ENCODE measurements at regions of chr19 and their contacts with region 1.

Region 1: GRCh38 chr19:46404055-46404752 is 9.2 kb downstream of the CCDC8 start:
- DNase-seq: peak; percentile 80 to 93
- ATAC-seq: peak; percentile 89 to 90
- H3K4me3 ChIP-seq: peak overlapping the region; percentile 53
- H3K27ac ChIP-seq: peak overlapping the region; percentile 90 to 92
- H3K4me1 ChIP-seq: no peaks in the 10 kb centered on the region
- CTCF ChIP-seq: peak; percentile 32; the same call in 2 of the 3 replicates
- EP300 ChIP-seq: no peak
- POLR2A ChIP-seq: peak; percentile 78; the same call in 1 of the 2 replicates
- RAD21 ChIP-seq: no peak

Region 2: GRCh38 chr19:46355234-46356148 is 48.7 kb before region 1 on chr19:
- CTCF ChIA-PET with region 1: interaction called, 10 read pairs
- POLR2A ChIA-PET with region 1: no interaction called
- DNase-seq: peak in 1 of 2 experiments; percentile 21
- ATAC-seq: peak in 1 of 2 experiments; percentile 31; a peak in 3 of 6 replicates
- H3K4me3 ChIP-seq: no peak overlapping the region
- H3K27ac ChIP-seq: peak overlapping the region in 1 of 2 experiments; percentile 45; a peak in 3 of 6 replicates
- H3K4me1 ChIP-seq: peaks cover 44% of the 10 kb centered on the region
- CTCF ChIP-seq: no peak
- EP300 ChIP-seq: no peak
- POLR2A ChIP-seq: no peak
- RAD21 ChIP-seq: no peak

Region 3: GRCh38 chr19:46426506-46427162 is 22.4 kb after region 1 on chr19:
- CTCF ChIA-PET with region 1: interaction called, 43 read pairs
- POLR2A ChIA-PET with region 1: no interaction called
- DNase-seq: peak; percentile 81 to 95
- ATAC-seq: peak; percentile 90
- H3K4me3 ChIP-seq: peak overlapping the region; percentile 55
- H3K27ac ChIP-seq: peak overlapping the region; percentile 68 to 86
- H3K4me1 ChIP-seq: peaks cover 8% of the 10 kb centered on the region
- CTCF ChIP-seq: no peak
- EP300 ChIP-seq: no peak
- POLR2A ChIP-seq: no peak; the same call in 1 of the 2 replicates
- RAD21 ChIP-seq: no peak

Region 4: GRCh38 chr19:46442808-46443450 is 38.7 kb after region 1 on chr19:
- CTCF ChIA-PET with region 1: interaction called, 22 read pairs
- POLR2A ChIA-PET with region 1: no interaction called
- DNase-seq: peak; percentile 60 to 61
- ATAC-seq: peak; percentile 83 to 90
- H3K4me3 ChIP-seq: no peak overlapping the region
- H3K27ac ChIP-seq: peak overlapping the region; percentile 64 to 65
- H3K4me1 ChIP-seq: peaks cover 13% of the 10 kb centered on the region
- CTCF ChIP-seq: no peak
- EP300 ChIP-seq: no peak
- POLR2A ChIP-seq: no peak
- RAD21 ChIP-seq: no peak

Region 5: DNA sequence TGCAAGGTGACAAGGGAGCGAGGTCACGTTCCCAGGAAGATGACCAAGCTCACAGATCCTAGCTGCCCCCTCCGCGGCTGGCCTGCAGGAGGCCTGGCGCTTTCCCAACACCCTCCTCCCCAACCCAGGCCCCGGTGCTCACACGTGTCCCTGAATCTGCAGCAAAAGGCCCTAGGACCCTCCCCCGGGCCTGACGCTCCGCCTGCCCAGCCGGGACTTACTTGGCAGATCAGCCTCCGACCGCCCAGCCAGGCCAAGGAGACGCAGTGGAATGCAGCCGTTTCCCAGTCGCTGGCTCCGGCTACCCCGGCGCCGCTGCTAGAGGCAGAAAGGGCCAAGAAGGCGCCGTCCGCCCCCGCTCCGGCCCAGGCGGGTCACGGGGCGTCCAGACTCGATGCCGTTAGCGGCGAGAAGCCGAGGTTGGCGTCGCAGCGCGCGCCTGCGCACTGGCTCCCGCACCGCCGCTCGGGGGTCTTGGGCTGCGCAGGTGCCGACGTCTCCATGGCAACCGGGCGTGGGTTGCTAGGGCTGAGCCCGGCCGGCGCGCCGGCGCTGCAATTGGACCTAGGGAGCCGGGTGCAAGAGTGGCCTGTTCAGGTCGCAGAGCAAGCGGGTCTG is 67.0 kb after region 1 on chr19 and contains the start of gene PNMA8A:
- CTCF ChIA-PET with region 1: interaction called, 358 read pairs
- POLR2A ChIA-PET with region 1: no interaction called
- DNase-seq: peak; percentile 57 to 65
- ATAC-seq: peak; percentile 67 to 78
- H3K4me3 ChIP-seq: peak within 1 kb of the TSS; percentile 55
- H3K27ac ChIP-seq: peak within 1 kb of the TSS; percentile 76 to 88
- H3K4me1 ChIP-seq: peaks cover 16% of the 10 kb centered on the region; the same call in 2 of the 3 replicates
- CTCF ChIP-seq: no peak
- EP300 ChIP-seq: no peak
- POLR2A ChIP-seq: peak; percentile 58
- RAD21 ChIP-seq: no peak
- polyA plus RNA-seq, gene PNMA8A: 11.2 and 14.1 TPM in 2 replicates

Region 6: GRCh38 chr19:46495787-46496101 is 91.5 kb after region 1 on chr19 and contains the start of gene PNMA8B:
- CTCF ChIA-PET with region 1: interaction called, 45 read pairs
- POLR2A ChIA-PET with region 1: interaction called, 3 read pairs
- DNase-seq: no peak
- ATAC-seq: no peak
- H3K4me3 ChIP-seq: no peak within 1 kb of the TSS
- H3K27ac ChIP-seq: no peak within 1 kb of the TSS
- H3K4me1 ChIP-seq: peaks cover 5% of the 10 kb centered on the region; the same call in 1 of the 3 replicates
- CTCF ChIP-seq: no peak
- EP300 ChIP-seq: no peak
- POLR2A ChIP-seq: no peak
- RAD21 ChIP-seq: no peak
- polyA plus RNA-seq, gene PNMA8B: not detected in 2 replicates

Region 7: GRCh38 chr19:46513461-46514236 is 109.4 kb after region 1 on chr19:
- CTCF ChIA-PET with region 1: interaction called, 101 read pairs
- POLR2A ChIA-PET with region 1: no interaction called
- DNase-seq: peak; percentile 83 to 88
- ATAC-seq: peak; percentile 91 to 94
- H3K4me3 ChIP-seq: no peak overlapping the region
- H3K27ac ChIP-seq: peak overlapping the region in 1 of 2 experiments; percentile 52; a peak in 1 of 6 replicates
- H3K4me1 ChIP-seq: peaks cover 16% of the 10 kb centered on the region; the same call in 2 of the 3 replicates
- CTCF ChIP-seq: peak; percentile 97
- EP300 ChIP-seq: no peak
- POLR2A ChIP-seq: no peak
- RAD21 ChIP-seq: peak; percentile 95 to 97